ENCODE measurements at regions of chr20 and their contacts with region 1.

Region 1: DNA sequence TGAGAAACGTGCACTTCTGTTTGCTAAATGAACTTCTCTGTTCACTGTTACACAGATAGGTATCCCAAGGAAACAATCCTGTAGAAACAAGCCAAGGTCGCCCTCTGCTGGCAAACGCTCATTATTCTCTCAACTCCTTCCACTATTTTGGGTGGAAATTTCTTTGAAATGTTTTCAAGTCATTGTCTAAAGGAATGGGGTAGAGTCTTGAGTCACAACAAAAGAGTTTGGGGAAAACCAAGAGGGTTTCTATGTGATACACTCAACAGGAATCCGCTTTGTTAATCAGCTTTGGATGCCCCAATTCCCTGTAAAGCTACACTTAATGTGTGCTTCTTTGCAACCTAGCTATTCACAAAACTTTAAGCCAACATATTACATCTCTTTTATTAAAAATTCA is 4.6 kb upstream of the RAE1 start:
- DNase-seq: peak; percentile 49 to 81 (median 50)
- ATAC-seq: peak; percentile 79
- H3K4me3 ChIP-seq: no peak overlapping the region
- H3K27ac ChIP-seq: no peak overlapping the region
- H3K4me1 ChIP-seq: peaks cover 0 to 4% of the 10 kb centered on the region in 2 experiments; a peak in 1 of 5 replicates
- H3K27me3 ChIP-seq: no peaks in the 10 kb centered on the region
- CTCF ChIP-seq: peak; percentile 73 to 91 (median 80)
- EP300 ChIP-seq: no peak
- POLR2A ChIP-seq: no peak
- RAD21 ChIP-seq: peak; percentile 84 to 91

Region 2: DNA sequence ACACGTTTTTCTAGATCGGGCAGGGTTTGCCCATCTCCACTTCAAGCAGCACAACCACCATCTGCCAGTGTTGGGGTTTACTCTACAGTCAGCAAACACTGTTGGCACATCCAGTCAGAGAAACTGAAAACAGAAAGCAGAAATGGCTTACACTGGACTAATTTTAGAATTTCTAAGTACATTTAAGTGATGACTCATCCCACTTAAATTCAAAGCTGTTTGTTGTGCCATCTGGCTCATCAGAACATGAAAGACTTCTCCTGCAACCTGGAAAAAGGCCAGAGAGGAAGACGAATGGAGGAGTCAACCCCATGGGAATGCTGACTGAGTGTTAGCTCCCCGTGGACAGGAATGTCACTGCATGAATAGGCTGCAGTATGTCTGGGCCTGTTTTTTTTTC is 791.6 kb before region 1 on chr20:
- CTCF ChIA-PET with region 1: interaction called, 6 read pairs
- POLR2A ChIA-PET with region 1: no interaction called
- in situ Hi-C with region 1: no loop called
- intact Hi-C with region 1: loop called (anchors 10 kb)
- DNase-seq: peak in 3 of 4 experiments; percentile 41 to 61 (median 54)
- ATAC-seq: no peak
- H3K4me3 ChIP-seq: no peak overlapping the region
- H3K27ac ChIP-seq: no peak overlapping the region
- H3K4me1 ChIP-seq: peaks cover 0 to 6% of the 10 kb centered on the region in 2 experiments; a peak in 1 of 5 replicates
- H3K27me3 ChIP-seq: peaks cover 8 to 33% of the 10 kb centered on the region in 2 experiments; a peak in 4 of 5 replicates
- CTCF ChIP-seq: no peak
- EP300 ChIP-seq: no peak
- POLR2A ChIP-seq: no peak
- RAD21 ChIP-seq: no peak

Region 3: GRCh38 chr20:57089691-57090150 is 256.8 kb before region 1 on chr20:
- CTCF ChIA-PET with region 1: interaction called, 55 read pairs
- POLR2A ChIA-PET with region 1: interaction called, 4 read pairs
- in situ Hi-C with region 1: loop called (anchors 5 kb)
- intact Hi-C with region 1: loop called (anchors 1 kb)
- DNase-seq: peak; percentile 73 to 82 (median 78)
- ATAC-seq: peak; percentile 95
- H3K4me3 ChIP-seq: no peak overlapping the region
- H3K27ac ChIP-seq: no peak overlapping the region
- H3K4me1 ChIP-seq: peaks cover 0 to 32% of the 10 kb centered on the region in 2 experiments; a peak in 3 of 5 replicates
- H3K27me3 ChIP-seq: peaks cover 5 to 38% of the 10 kb centered on the region in 2 experiments; a peak in 4 of 5 replicates
- CTCF ChIP-seq: peak; percentile 89 to 93 (median 91)
- EP300 ChIP-seq: no peak
- POLR2A ChIP-seq: no peak
- RAD21 ChIP-seq: peak; percentile 87 to 90

Region 4: GRCh38 chr20:57391074-57391554 is 44.6 kb after region 1 on chr20 and contains the start of gene RBM38:
- CTCF ChIA-PET with region 1: no interaction called
- POLR2A ChIA-PET with region 1: no interaction called
- in situ Hi-C with region 1: no loop called
- intact Hi-C with region 1: no loop called
- DNase-seq: peak; percentile 89 to 96 (median 92)
- ATAC-seq: peak; percentile 76
- H3K4me3 ChIP-seq: peak within 1 kb of the TSS; percentile 75
- H3K27ac ChIP-seq: peak within 1 kb of the TSS; percentile 95
- H3K4me1 ChIP-seq: peaks cover 34 to 68% of the 10 kb centered on the region in 2 experiments
- H3K27me3 ChIP-seq: no peaks in the 10 kb centered on the region
- CTCF ChIP-seq: no peak
- EP300 ChIP-seq: no peak
- POLR2A ChIP-seq: peak; percentile 76
- RAD21 ChIP-seq: no peak
- polyA plus RNA-seq, gene RBM38: 0.28 to 0.39 TPM